ENCODE measurements at regions of chr3 and their contacts with region 1.

Region 1: DNA sequence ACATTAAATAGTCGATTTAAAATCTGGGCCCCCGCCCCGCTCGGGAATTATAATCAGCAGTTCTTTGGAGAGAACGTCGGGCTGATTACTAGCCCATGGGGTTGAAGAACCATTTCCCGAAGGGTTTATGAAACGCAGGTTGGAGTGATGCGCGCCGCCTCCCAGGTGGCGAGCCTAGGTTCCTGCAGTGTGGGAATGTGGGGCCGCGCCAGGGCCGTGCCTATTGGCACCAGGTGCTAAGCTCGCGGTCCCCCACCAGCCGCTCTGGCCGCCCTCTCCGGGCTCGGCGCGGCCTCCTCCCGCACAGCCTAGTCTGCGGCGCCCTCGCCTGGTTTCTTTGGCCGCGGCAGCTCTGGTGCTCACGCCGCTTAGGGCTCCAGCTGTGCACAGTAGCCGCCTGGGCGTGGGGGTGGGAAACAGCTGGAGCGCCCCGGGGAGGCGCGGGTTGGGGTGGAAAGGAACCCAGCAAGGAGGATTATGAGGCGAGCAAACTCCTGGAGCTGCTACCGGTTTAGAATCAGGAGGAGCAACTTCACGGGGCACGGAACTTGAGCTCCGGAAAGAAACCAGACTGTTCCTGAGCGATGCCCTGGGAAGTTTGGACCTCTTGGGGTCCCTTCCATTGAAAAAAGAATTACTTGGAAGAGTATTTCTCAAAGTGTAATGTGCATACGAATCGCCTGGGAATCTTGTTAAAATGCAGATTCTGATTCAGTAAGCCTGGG is 5.6 kb upstream of the MECOM start:
- DNase-seq: peak; percentile 84
- H3K4me3 ChIP-seq: peak overlapping the region; percentile 45 to 77 (median 70)
- H3K27ac ChIP-seq: peak overlapping the region; percentile 51
- H3K4me1 ChIP-seq: peaks cover 42% of the 10 kb centered on the region
- H3K27me3 ChIP-seq: no peaks in the 10 kb centered on the region
- CTCF ChIP-seq: peak; percentile 94
- POLR2A ChIP-seq: no peak

Region 2: DNA sequence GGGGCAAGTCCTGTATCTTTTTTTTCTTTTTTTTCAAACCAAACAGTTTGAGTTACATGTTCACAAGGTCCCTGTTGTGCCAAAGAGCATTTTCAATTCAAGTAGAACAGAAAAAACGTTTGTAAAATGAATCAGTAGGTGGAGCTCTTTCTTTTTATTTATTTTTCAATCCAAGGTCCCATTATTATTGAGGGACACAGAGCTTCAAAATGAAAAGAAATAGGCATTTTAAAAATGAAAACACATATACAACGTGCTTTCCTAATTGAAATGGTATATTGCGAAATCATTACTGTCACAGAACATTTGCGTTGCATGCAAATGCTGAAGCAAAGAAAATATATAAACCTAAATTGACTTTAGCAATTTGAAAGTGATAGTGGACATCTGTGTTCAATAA is 716.6 kb before region 1 on chr3:
- CTCF ChIA-PET with region 1: interaction called, 41 read pairs
- POLR2A ChIA-PET with region 1: no interaction called
- dilution Hi-C with region 1: no loop called
- intact Hi-C with region 1: loop called (anchors 1 kb)
- DNase-seq: peak; percentile 62
- H3K4me3 ChIP-seq: no peak overlapping the region
- H3K27ac ChIP-seq: no peak overlapping the region
- H3K4me1 ChIP-seq: no peaks in the 10 kb centered on the region
- H3K27me3 ChIP-seq: no peaks in the 10 kb centered on the region
- CTCF ChIP-seq: no peak
- POLR2A ChIP-seq: no peak

Region 3: GRCh38 chr3:169133178-169134161 is 535.6 kb before region 1 on chr3:
- CTCF ChIA-PET with region 1: interaction called, 40 read pairs
- POLR2A ChIA-PET with region 1: interaction called, 3 read pairs
- dilution Hi-C with region 1: no loop called
- intact Hi-C with region 1: no loop called
- DNase-seq: peak; percentile 83
- H3K4me3 ChIP-seq: no peak overlapping the region
- H3K27ac ChIP-seq: peak overlapping the region; percentile 52
- H3K4me1 ChIP-seq: peaks cover 44% of the 10 kb centered on the region
- H3K27me3 ChIP-seq: no peaks in the 10 kb centered on the region
- CTCF ChIP-seq: peak in 1 of 2 donors; percentile 16
- POLR2A ChIP-seq: peak; percentile 17

Region 4: GRCh38 chr3:169218314-169218983 is 450.7 kb before region 1 on chr3:
- CTCF ChIA-PET with region 1: interaction called, 54 read pairs
- POLR2A ChIA-PET with region 1: no interaction called
- dilution Hi-C with region 1: no loop called
- intact Hi-C with region 1: loop called (anchors 1 kb)
- DNase-seq: peak; percentile 98
- H3K4me3 ChIP-seq: no peak overlapping the region
- H3K27ac ChIP-seq: peak overlapping the region; percentile 66
- H3K4me1 ChIP-seq: peaks cover 23% of the 10 kb centered on the region
- H3K27me3 ChIP-seq: no peaks in the 10 kb centered on the region
- CTCF ChIP-seq: peak; percentile 74 to 89
- POLR2A ChIP-seq: no peak

Region 5: GRCh38 chr3:169241991-169242707 is 427.0 kb before region 1 on chr3:
- CTCF ChIA-PET with region 1: interaction called, 17 read pairs
- POLR2A ChIA-PET with region 1: interaction called, 3 read pairs
- dilution Hi-C with region 1: no loop called
- intact Hi-C with region 1: loop called (anchors 2 kb)
- DNase-seq: peak; percentile 87
- H3K4me3 ChIP-seq: peak overlapping the region; percentile 40 to 79 (median 42)
- H3K27ac ChIP-seq: peak overlapping the region; percentile 97
- H3K4me1 ChIP-seq: peaks cover 64% of the 10 kb centered on the region
- H3K27me3 ChIP-seq: no peaks in the 10 kb centered on the region
- CTCF ChIP-seq: no peak
- POLR2A ChIP-seq: peak; percentile 42

Region 6: DNA sequence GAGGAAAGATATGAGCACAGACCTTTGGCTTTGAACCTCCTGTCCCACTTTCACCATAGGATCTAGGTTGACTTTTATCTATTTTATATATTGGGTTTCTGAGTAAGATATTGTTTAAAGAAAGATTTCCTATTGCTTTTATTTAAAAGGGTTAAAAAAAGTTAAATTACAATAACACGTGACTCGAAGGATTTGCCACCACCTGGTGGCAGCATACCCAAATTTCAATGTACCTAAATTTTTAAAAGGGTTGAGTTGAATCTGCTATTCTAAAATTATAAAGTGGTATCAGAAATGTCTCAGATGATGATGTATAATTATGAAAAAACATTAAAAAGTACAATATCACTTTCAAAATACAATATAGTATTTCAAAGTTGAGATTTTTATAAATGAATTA is 374.0 kb before region 1 on chr3:
- CTCF ChIA-PET with region 1: interaction called, 7 read pairs
- POLR2A ChIA-PET with region 1: no interaction called
- dilution Hi-C with region 1: no loop called
- intact Hi-C with region 1: loop called (anchors 2 kb)
- DNase-seq: peak; percentile 71
- H3K4me3 ChIP-seq: no peak overlapping the region
- H3K27ac ChIP-seq: no peak overlapping the region
- H3K4me1 ChIP-seq: peaks cover 7% of the 10 kb centered on the region
- H3K27me3 ChIP-seq: no peaks in the 10 kb centered on the region
- CTCF ChIP-seq: peak; percentile 29 to 32
- POLR2A ChIP-seq: no peak

Region 7: DNA sequence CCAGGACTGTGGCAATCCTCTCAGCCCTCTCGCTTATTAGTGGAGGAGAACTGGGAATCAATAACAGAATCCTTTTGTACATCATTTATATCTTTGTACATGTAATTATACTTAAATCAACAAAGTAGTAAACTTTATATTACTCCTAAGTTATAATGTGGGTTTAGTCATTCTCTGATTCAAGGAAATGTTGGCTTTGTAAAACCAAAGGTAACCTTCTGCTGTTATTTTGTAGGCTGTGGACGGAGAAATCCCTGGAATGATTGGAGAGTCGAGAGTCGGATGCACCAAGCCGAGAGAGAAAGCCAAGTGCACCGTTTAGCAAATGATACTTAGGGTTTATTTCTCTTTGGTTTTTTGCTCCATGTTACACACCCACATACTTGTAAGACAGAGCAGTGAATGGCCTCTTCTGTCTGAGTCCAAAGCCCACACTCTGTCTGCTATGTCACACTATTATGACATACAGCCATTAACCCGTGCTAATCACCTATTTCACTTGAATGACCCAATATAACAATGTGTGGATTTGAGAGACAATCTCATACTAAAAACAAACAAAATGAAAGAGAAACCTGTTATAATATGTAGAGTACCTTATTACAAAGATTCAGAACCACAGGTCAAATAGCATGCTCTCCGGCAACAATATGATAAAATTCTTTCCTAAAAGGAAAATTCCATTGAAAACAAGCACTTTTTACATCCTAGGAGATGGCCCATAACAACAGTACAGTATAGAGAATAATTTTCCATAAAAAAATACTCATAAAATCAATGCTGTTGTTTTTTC is 77.8 kb before region 1 on chr3:
- CTCF ChIA-PET with region 1: no interaction called
- POLR2A ChIA-PET with region 1: no interaction called
- dilution Hi-C with region 1: no loop called
- intact Hi-C with region 1: no loop called
- DNase-seq: peak; percentile 36
- H3K4me3 ChIP-seq: no peak overlapping the region
- H3K27ac ChIP-seq: no peak overlapping the region
- H3K4me1 ChIP-seq: peaks cover 10% of the 10 kb centered on the region
- H3K27me3 ChIP-seq: no peaks in the 10 kb centered on the region
- CTCF ChIP-seq: no peak
- POLR2A ChIP-seq: no peak

Region 8: DNA sequence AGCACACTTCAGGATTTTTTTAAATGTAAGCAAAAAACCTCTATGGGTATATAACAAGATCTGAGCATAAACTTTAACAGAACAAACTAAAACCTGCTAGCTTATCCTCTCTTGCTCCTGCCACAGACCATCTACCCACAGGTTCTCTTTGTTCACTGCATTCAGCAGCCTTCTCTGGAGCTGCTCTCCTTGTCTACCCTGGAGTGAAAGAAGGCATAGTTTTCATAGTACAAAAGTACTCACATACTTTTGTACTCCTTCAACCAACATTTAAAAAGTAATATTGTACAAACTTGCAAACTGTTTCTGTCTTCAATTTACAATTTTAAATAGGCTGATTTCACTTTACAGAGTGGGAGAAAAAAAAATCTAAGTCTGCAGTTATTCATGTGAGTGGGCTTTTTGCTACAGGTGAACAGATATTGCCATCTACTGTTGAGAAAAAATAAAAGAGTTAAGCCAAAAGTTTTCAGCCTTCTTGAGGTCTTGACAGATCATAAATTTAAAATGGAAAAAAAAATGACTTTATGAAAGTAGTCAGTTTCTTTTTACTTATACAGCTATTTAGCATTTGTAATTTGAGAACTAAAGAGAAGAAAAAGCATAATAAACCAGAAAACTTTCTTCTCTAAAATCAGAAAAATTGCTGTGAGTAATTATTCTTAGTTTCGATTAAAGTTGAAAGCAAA is 75.4 kb after region 1 on chr3:
- CTCF ChIA-PET with region 1: interaction called, 26 read pairs
- POLR2A ChIA-PET with region 1: no interaction called
- dilution Hi-C with region 1: no loop called
- intact Hi-C with region 1: no loop called
- DNase-seq: peak; percentile 74
- H3K4me3 ChIP-seq: no peak overlapping the region
- H3K27ac ChIP-seq: no peak overlapping the region
- H3K4me1 ChIP-seq: no peaks in the 10 kb centered on the region
- H3K27me3 ChIP-seq: peaks cover 2 to 13% of the 10 kb centered on the region in 2 experiments
- CTCF ChIP-seq: peak in 1 of 2 donors; percentile 21
- POLR2A ChIP-seq: no peak